AG04449 (cell line): ENCODE measurements at regions of chr7 and their contacts with region 1.

Region 1: GRCh38 chr7:55309040-55309991 is 55.8 kb upstream of the LANCL2 start:
- DNase-seq: no peak
- H3K4me3 ChIP-seq: no peak overlapping the region
- CTCF ChIP-seq: no peak

Region 2: GRCh38 chr7:55325371-55325792 is 16.1 kb after region 1 on chr7:
- CTCF ChIA-PET with region 1: interaction called, 3 read pairs
- POLR2A ChIA-PET with region 1: interaction called, 11 read pairs
- DNase-seq: peak; percentile 63
- H3K4me3 ChIP-seq: no peak overlapping the region
- CTCF ChIP-seq: no peak